Dorsolateral prefrontal cortex (tissue), 120 donors: ENCODE measurements at regions of chr18 and their contacts with region 1.

Region 1: DNA sequence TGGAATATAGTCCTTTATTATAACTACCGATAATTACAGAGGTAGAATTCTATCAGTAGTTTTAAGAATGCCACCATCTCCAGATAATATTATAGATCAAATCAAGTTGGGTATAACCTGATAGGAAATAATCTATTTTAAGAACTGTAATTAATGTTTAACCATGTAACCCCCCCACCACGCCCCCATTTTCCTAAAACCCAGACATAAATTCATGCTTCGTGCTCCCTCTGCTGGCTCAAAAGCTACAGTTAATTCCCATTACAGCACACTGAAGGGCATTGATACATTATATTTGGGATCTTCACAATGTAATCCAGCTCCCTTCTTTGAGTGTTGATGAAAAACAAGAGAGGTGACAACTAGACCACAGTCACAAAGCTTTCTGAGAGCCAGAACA is 228.0 kb upstream of the SMAD7 start:
- DNase-seq: peak in 3 of 10 donors; percentile 38 to 56 (median 40)
- H3K4me3 ChIP-seq: no peak overlapping the region
- H3K27ac ChIP-seq: peak overlapping the region in 1 of 59 donors; percentile 39
- H3K27me3 ChIP-seq: no peaks in the 10 kb centered on the region
- CTCF ChIP-seq: peak; percentile 25 to 83 (median 65)

Region 2: GRCh38 chr18:48851599-48851960 is 327.2 kb before region 1 on chr18:
- intact Hi-C with region 1: loop called in 1 of 2 experiments (anchors 5 kb)
- DNase-seq: peak in 5 of 10 donors; percentile 54 to 74 (median 60)
- H3K4me3 ChIP-seq: peak overlapping the region in 5 of 59 donors; percentile 0 to 26 (median 12)
- H3K27ac ChIP-seq: peak overlapping the region; percentile 14 to 93 (median 79)
- H3K27me3 ChIP-seq: no peaks in the 10 kb centered on the region
- CTCF ChIP-seq: no peak